Endothelial cell of umbilical vein (primary cell): ENCODE measurements at regions of chr12 and their contacts with region 1.

Region 1: DNA sequence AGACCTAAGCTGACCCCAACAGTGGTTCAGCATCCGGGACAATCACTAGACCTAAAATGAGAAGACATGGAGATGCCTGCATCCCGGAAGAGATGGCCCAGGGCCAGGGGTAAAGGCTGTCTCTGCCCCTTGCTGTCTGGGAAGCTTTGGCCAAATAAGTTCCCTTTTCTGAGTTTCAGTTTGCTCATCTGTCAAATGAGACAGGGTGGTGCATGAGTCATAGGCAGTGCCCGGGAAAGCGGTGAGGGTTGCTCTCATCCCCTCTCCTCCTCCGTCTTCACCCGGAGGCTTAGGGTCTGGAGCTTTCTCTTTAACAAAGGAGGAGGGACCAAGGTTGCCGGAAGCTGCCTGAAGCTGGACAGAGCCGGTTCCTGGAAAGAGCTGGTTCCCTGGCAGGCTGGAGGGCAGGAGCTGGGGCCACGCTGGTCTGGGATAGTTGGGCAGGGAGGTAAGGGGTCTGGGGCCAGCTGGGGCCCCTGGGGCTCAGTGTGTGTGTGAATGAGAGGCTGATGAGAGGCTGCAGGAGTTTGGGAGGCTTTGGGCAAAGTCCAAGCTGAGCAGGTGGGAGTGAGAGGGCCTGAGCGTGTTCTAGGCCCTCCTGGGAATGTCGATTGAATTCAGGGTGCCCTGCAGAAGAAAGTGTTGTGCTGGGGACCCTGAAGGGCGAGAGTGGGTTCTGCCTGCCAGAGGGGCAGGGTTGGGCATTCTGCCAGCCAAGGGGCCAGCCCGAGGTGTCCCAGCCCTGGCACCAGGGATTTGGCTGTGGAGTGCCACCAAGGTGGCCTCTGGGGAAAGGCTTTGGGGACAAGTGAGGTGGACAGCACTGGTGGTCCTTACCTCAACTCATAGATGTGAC is at the start of gene SDSL:
- DNase-seq: peak; percentile 58
- H3K4me3 ChIP-seq: peak within 1 kb of the TSS; percentile 29 to 52 (median 51)
- H3K27ac ChIP-seq: peak within 1 kb of the TSS; percentile 48
- H3K4me1 ChIP-seq: peaks cover 7% of the 10 kb centered on the region
- H3K27me3 ChIP-seq: no peaks in the 10 kb centered on the region
- CTCF ChIP-seq: no peak
- POLR2A ChIP-seq: peak; percentile 53
- total RNA-seq, gene SDSL: 3.7 and 5.7 TPM in 2 replicates

Region 2: DNA sequence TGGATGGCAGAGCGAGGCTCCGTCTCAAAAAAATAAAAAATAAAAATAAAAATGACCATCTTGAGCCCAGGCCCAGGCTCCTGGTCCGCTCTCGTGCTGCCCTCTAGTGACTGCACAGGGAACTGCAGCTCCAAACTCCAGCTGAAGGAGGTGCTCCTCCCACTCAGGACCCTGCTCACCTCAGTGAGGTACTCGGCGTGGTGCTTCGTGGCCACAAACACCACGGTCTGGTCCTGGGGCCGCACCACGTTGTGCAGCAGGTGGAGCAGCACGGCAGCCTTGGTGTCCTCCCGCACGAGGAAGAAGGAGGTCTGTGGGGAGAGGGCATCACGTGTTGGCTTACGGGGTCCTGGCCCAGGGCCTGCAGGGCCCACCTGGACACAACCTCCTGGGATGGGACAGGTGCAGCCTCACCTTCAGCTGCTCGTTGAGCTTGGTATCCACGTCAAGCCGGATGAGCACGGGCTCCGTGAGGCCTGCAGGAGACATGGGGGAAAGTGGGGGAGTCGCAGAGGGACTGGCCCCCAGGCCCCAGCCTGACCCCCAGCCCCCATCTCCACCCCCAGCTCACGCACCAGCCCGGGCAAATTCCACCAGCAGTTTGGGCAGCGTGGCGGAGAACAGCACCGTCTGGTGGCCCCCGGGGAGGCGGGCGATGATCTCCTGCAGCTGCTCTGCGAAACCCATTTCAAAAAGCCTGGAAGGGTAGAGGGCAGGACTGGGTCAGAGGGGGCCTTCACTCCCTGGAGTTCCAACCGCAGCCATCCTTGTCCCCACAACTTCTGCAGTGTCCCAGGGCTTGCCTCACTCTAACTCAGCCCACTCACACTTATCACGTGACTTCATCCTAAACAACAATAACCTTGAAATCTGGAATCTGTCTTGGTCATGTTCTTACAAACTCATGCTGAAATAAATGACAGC is 247.5 kb before region 1 on chr12:
- CTCF ChIA-PET with region 1: interaction called, 10 read pairs
- POLR2A ChIA-PET with region 1: no interaction called
- dilution Hi-C with region 1: no loop called
- intact Hi-C with region 1: no loop called
- DNase-seq: peak; percentile 66
- H3K4me3 ChIP-seq: no peak overlapping the region
- H3K27ac ChIP-seq: no peak overlapping the region
- H3K4me1 ChIP-seq: no peaks in the 10 kb centered on the region
- H3K27me3 ChIP-seq: no peaks in the 10 kb centered on the region
- CTCF ChIP-seq: peak; percentile 95
- POLR2A ChIP-seq: no peak

Region 3: DNA sequence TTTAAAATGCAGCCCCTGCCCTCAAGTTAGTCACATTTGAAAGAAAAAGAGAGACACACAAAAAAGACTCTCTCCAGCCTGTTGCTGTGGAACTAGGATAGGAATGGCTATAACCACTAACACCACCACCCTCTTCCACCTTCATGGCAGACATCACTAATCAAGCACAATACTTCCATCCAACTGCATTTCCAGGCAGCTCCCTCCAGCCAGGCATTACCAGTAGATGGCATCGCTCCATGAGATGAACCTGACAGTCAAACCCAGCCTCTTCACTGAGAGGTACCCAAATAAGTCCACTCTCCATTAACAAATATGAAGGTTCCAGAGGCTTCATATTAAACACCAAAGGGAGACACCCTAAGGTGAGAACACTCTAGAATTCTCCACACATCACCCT is 111.8 kb before region 1 on chr12:
- CTCF ChIA-PET with region 1: interaction called, 32 read pairs
- POLR2A ChIA-PET with region 1: no interaction called
- dilution Hi-C with region 1: no loop called
- intact Hi-C with region 1: loop called (anchors 1 kb)
- DNase-seq: no peak
- H3K4me3 ChIP-seq: no peak overlapping the region
- H3K27ac ChIP-seq: no peak overlapping the region
- H3K4me1 ChIP-seq: no peaks in the 10 kb centered on the region
- H3K27me3 ChIP-seq: no peaks in the 10 kb centered on the region
- CTCF ChIP-seq: no peak
- POLR2A ChIP-seq: no peak

Region 4: DNA sequence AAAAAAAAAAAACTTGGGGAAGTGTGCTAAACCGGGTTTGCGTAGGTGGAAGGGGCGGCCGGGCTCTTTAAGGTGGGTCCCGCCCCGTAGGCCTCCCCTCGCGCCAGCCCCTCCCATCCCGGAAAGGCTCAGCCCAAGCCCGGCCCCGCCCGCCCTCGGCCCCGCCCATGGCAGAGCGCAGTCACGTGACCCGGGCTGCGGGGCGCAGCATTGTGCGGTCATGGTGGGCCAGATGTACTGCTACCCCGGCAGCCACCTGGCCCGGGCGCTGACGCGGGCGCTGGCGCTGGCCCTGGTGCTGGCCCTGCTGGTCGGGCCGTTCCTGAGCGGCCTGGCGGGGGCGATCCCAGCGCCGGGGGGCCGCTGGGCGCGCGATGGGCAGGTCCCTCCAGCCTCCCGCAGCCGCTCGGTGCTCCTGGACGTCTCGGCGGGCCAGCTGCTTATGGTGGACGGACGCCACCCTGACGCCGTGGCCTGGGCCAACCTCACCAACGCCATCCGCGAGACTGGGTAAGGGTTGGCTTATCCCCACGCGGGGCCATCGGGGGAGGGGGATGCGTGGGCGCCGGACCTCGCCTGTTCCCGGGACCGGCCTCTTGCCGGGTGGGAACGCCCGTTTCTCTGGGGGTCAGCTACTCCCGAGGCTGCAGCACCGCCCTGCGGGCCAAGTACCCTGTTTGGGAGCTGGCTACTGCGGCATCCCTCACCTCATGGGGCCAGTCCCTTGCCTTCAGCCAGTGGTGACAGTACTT is 63.7 kb before region 1 on chr12 and contains the start of gene PLBD2:
- CTCF ChIA-PET with region 1: interaction called, 6 read pairs
- POLR2A ChIA-PET with region 1: no interaction called
- dilution Hi-C with region 1: no loop called
- intact Hi-C with region 1: loop called (anchors 1 kb)
- DNase-seq: peak; percentile 95
- H3K4me3 ChIP-seq: peak within 1 kb of the TSS; percentile 35 to 62 (median 57)
- H3K27ac ChIP-seq: peak within 1 kb of the TSS; percentile 20
- H3K4me1 ChIP-seq: peaks cover 6% of the 10 kb centered on the region
- H3K27me3 ChIP-seq: no peaks in the 10 kb centered on the region
- CTCF ChIP-seq: no peak
- POLR2A ChIP-seq: peak; percentile 70
- total RNA-seq, gene PLBD2: 44.8 and 46.8 TPM in 2 replicates

Region 5: DNA sequence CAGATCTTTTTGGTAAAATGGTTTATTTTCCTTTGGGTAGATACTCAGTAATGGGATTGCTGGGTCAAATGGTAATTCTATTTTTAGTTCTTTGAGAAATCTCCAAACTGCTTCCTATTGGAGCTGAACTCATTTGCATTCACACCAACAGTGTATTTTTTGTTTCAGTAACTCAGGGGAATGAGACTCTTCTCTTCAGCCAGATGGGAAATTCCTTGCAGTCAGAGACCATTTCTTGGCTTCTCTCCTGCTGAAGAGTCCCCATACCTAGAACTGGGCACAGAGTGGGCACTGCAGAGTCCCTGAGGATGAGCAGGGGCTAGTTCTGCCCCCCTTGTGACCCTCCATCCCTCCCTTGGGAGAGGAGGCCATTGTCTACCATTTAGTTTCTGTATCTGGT is 10.7 kb after region 1 on chr12:
- CTCF ChIA-PET with region 1: interaction called, 31 read pairs
- POLR2A ChIA-PET with region 1: no interaction called
- dilution Hi-C with region 1: no loop called
- intact Hi-C with region 1: no loop called
- DNase-seq: no peak
- H3K4me3 ChIP-seq: no peak overlapping the region
- H3K27ac ChIP-seq: no peak overlapping the region
- H3K4me1 ChIP-seq: no peaks in the 10 kb centered on the region
- H3K27me3 ChIP-seq: no peaks in the 10 kb centered on the region
- CTCF ChIP-seq: no peak
- POLR2A ChIP-seq: no peak

Region 6: DNA sequence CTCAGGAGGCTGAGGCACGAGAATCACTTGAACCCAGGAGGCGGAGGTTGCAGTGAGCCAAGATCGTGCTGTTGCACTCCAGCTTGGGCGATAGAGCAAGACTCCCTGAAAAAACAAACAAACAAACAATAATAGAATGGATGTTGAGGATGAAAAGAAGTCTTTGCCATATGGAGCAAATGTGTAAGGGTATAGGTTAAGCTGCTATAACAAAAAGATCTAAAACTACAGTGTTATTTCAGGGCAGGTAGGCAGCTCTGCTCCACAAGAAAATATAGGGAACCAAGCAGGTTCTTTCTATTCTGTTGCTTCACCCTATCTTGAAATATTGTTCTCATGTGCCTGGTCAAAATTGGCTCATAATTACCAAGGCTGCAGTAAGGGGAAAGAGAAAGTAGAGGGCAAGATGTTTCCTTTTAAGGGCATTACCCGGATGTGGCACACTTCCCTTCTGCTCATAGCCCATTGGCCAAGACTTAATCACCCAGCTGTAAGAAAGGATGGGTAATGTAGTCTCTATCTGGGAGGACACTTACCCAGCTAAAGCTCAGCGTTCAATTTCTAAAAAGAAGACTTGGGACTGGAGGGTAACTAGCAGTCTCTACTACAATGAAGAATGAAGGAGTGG is 23.4 kb after region 1 on chr12:
- CTCF ChIA-PET with region 1: interaction called, 24 read pairs
- POLR2A ChIA-PET with region 1: no interaction called
- dilution Hi-C with region 1: no loop called
- intact Hi-C with region 1: no loop called
- DNase-seq: no peak
- H3K4me3 ChIP-seq: no peak overlapping the region
- H3K27ac ChIP-seq: no peak overlapping the region
- H3K4me1 ChIP-seq: no peaks in the 10 kb centered on the region
- H3K27me3 ChIP-seq: peaks cover 0 to 3% of the 10 kb centered on the region in 2 experiments
- CTCF ChIP-seq: no peak
- POLR2A ChIP-seq: no peak

Region 7: DNA sequence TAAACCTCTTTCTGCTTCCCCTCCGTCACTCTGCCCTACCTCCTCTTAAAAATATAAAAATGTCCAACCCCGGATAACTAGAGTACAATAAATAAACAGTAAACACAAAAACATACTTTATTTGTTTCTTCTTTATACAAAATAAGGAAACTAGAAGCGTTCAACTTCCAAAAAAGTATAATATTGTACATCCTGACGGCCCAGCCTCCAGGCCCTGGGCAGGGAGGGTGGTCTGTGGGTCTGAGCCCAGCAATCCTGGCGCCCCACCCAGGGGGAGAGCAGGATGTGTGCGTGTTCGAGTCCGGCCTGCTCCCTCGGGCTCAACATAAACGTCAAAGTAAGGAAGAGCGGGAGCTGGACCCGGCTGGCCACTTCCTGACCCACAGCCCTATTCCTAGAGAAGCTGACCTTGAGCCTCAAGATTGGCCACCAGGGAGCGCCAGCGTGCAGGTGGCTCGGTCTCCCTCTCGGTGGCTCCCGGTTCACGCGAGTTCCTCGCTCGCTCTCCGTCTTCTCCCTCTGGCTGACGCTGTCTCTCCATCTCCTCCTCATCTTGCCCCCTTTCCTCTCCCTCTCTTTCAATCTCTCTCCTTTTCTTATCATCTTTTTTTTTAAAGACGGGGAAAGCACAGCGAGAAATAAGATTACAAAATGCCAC is 40.0 kb after region 1 on chr12:
- CTCF ChIA-PET with region 1: interaction called, 13 read pairs
- POLR2A ChIA-PET with region 1: no interaction called
- dilution Hi-C with region 1: no loop called
- intact Hi-C with region 1: no loop called
- DNase-seq: peak; percentile 65
- H3K4me3 ChIP-seq: no peak overlapping the region
- H3K27ac ChIP-seq: no peak overlapping the region
- H3K4me1 ChIP-seq: no peaks in the 10 kb centered on the region
- H3K27me3 ChIP-seq: peaks cover 32 to 54% of the 10 kb centered on the region in 2 experiments
- CTCF ChIP-seq: peak; percentile 84 to 98
- POLR2A ChIP-seq: no peak